Activated CD8-positive, alpha-beta T cell treated with anti-CD3 and anti-CD28 coated beads for 36 hours (primary cell): ENCODE measurements at regions of chr9 and their contacts with region 1.

Region 1: GRCh38 chr9:96327694-96328352 is 25.8 kb upstream of the HSD17B3 start:
- DNase-seq: peak; percentile 57
- ATAC-seq: peak; percentile 84
- H3K4me3 Mint-ChIP-seq: no peak overlapping the region
- H3K27ac Mint-ChIP-seq: no peak overlapping the region
- H3K4me1 Mint-ChIP-seq: no peaks in the 10 kb centered on the region
- H3K27me3 Mint-ChIP-seq: no peaks in the 10 kb centered on the region
- CTCF ChIP-seq: peak; percentile 93

Region 2: GRCh38 chr9:96232539-96233241 is 95.1 kb before region 1 on chr9:
- CTCF ChIA-PET with region 1: interaction called, 14 read pairs
- POLR2A ChIA-PET with region 1: no interaction called
- intact Hi-C with region 1: no loop called
- DNase-seq: peak; percentile 56
- ATAC-seq: peak; percentile 84
- H3K4me3 Mint-ChIP-seq: no peak overlapping the region
- H3K27ac Mint-ChIP-seq: no peak overlapping the region
- H3K4me1 Mint-ChIP-seq: no peaks in the 10 kb centered on the region
- H3K27me3 Mint-ChIP-seq: peaks cover 43% of the 10 kb centered on the region
- CTCF ChIP-seq: peak; percentile 90

Region 3: DNA sequence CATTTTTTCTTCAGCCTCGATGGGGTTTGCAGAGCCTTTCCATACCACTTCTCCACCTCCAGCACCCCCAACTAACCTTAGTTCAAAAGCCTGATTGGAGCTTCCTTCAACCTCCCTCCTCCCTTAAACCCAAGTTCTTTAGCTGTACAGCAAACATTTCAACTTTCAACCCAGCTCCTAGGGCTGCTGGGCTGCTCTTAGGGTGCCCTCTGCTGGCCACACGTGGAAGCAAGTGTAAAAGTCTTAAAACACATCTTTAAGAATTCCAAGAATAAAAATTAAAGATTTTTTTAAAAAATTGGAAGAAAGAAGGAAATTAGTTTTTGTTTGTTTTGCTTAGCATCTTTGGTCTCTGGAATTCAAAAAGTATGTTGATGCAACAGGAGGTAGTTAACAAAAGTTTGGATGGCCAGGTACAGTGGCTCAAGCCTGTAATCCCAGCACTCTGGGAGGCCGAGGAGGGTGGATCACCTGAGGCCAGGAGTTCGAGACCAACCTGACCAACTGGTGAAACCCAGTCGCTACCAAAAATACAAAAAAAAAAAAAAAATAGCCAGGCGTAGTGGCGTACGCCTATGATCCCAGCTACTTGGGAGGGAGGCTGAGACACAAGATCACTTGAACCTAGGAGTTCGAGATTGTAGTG is 10.4 kb before region 1 on chr9:
- CTCF ChIA-PET with region 1: interaction called, 14 read pairs
- POLR2A ChIA-PET with region 1: no interaction called
- intact Hi-C with region 1: no loop called
- DNase-seq: peak; percentile 31
- ATAC-seq: no peak
- H3K4me3 Mint-ChIP-seq: no peak overlapping the region
- H3K27ac Mint-ChIP-seq: no peak overlapping the region
- H3K4me1 Mint-ChIP-seq: no peaks in the 10 kb centered on the region
- H3K27me3 Mint-ChIP-seq: peaks cover 6% of the 10 kb centered on the region
- CTCF ChIP-seq: peak; percentile 73

Region 4: GRCh38 chr9:96342571-96343245 is 14.9 kb after region 1 on chr9:
- CTCF ChIA-PET with region 1: interaction called, 11 read pairs
- POLR2A ChIA-PET with region 1: no interaction called
- intact Hi-C with region 1: no loop called
- DNase-seq: no peak
- ATAC-seq: no peak
- H3K4me3 Mint-ChIP-seq: no peak overlapping the region
- H3K27ac Mint-ChIP-seq: no peak overlapping the region
- H3K4me1 Mint-ChIP-seq: peaks cover 13% of the 10 kb centered on the region
- H3K27me3 Mint-ChIP-seq: no peaks in the 10 kb centered on the region
- CTCF ChIP-seq: no peak

Region 5: DNA sequence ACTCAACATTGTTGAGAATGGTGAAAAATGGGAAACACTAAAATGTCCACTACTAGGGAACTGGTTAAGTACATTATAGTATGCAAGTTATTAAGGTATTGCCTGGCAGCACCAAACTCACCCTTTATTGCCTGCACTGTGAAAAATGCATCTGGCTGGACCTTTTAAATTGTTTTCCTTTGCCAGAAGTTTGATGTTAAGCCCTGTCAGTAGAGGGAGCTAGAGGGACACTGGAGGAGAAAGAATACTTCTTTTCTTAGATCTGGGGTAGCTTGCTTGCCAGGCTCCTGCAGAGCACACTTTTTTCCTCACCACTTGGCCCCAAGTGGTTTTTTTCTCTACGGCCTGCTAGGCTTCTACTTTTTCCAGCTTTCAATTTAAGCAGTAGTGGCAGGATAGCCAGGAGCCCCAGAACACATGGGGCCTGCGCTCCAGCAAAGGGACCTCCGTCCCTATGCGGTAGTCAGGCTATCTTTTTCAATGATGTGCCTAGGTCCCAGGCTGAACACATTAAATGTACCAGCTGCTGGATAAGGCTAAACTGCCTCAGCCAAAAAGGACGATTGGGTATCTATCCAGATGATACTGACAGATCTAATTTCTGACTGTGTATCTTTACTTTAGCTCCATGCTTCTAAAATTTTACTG is 114.1 kb after region 1 on chr9:
- CTCF ChIA-PET with region 1: interaction called, 11 read pairs
- POLR2A ChIA-PET with region 1: no interaction called
- intact Hi-C with region 1: no loop called
- DNase-seq: no peak
- ATAC-seq: peak; percentile 68
- H3K4me3 Mint-ChIP-seq: no peak overlapping the region
- H3K27ac Mint-ChIP-seq: no peak overlapping the region
- H3K4me1 Mint-ChIP-seq: no peaks in the 10 kb centered on the region
- H3K27me3 Mint-ChIP-seq: no peaks in the 10 kb centered on the region
- CTCF ChIP-seq: peak; percentile 65

Region 6: DNA sequence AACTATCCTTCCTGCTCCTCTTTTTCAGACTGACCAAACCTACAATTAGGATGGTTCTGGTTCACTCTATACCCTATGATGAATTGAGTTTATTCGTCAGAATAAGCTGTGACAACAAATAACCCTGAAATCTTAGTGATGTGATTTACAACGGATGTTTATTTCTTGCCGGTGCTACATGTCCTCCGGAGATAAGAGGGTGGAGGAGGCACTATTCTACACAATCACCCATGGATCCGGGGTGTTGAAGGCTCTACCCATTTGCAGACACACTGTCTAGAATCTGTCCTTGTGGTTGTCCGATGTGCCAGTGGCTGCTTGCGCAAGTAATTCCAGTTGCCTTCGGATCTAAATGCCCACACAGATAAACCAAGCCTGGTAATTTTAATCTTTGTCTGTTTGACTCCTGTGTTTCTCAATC is 247.1 kb after region 1 on chr9:
- CTCF ChIA-PET with region 1: no interaction called
- POLR2A ChIA-PET with region 1: no interaction called
- intact Hi-C with region 1: no loop called
- DNase-seq: no peak
- ATAC-seq: no peak
- H3K4me3 Mint-ChIP-seq: no peak overlapping the region
- H3K27ac Mint-ChIP-seq: no peak overlapping the region
- H3K4me1 Mint-ChIP-seq: no peaks in the 10 kb centered on the region
- H3K27me3 Mint-ChIP-seq: peaks cover 12% of the 10 kb centered on the region
- CTCF ChIP-seq: no peak

Region 7: GRCh38 chr9:96654443-96655197 is 326.8 kb after region 1 on chr9:
- CTCF ChIA-PET with region 1: interaction called, 5 read pairs
- POLR2A ChIA-PET with region 1: no interaction called
- intact Hi-C with region 1: loop called (anchors 5 kb)
- DNase-seq: peak; percentile 77
- ATAC-seq: peak; percentile 81
- H3K4me3 Mint-ChIP-seq: peak overlapping the region; percentile 79
- H3K27ac Mint-ChIP-seq: peak overlapping the region; percentile 84
- H3K4me1 Mint-ChIP-seq: peaks cover 12% of the 10 kb centered on the region
- H3K27me3 Mint-ChIP-seq: no peaks in the 10 kb centered on the region
- CTCF ChIP-seq: no peak

Region 8: DNA sequence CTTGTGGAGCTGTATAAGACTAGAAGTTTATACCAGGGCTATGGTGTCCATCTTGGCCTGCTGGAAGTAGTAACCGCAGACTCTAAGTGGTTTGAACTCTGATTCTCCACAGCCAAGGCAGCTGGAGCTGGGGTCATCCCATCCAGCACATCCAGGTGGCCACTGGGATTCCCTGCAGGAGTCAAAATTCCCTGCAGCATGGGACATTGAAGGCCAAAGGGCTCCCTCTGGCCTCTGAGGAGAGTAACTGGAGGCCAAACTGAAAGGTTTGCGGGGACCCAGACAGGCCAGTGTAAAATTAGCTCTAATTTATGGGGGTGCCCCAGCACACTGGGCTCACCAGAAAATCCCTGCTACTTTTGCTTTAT is 339.5 kb after region 1 on chr9:
- CTCF ChIA-PET with region 1: interaction called, 29 read pairs
- POLR2A ChIA-PET with region 1: no interaction called
- intact Hi-C with region 1: no loop called
- DNase-seq: no peak
- ATAC-seq: no peak
- H3K4me3 Mint-ChIP-seq: no peak overlapping the region
- H3K27ac Mint-ChIP-seq: no peak overlapping the region
- H3K4me1 Mint-ChIP-seq: no peaks in the 10 kb centered on the region
- H3K27me3 Mint-ChIP-seq: peaks cover 6% of the 10 kb centered on the region
- CTCF ChIP-seq: no peak